CD14-positive monocyte (primary cell): ENCODE measurements at regions of chr1 and their contacts with region 1.

Region 1: DNA sequence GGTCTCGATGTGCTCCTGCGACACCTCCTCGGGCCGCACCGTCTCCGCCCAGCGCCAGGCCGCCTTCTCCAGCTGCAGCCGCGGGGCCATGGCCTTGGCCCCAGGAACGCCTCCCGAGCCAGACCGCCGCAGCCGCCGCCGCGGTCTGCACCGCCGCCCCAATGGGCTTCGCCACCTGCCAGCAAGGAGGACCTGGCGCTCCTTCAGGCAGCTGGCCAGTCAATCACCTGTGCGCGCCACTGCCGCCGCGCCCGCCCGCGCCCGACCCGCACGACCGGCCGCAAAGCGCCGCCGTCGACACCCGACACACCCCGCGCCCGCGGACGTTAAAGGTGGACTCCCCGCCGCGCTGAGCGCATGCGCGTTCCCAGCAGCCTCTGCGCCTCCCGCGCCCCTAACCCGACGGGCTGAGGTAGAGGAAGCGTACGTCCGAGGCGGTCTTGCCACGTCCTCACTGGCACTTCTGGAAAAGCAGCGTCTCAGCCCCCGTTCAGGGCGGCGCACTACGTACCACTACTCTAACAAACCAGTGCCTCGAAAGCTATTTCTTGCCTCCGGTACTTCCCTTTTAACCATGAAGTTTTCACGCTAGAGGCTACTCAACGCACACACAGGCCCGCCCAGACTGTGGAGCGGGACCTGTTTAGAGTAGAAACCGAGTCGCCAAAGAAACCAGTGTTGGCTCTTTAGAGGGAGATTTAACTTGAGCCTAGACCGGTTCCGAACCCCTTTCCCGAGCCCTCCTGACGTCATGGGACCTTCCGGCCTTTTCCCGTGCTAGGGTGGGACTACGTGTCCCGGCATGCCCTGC is at the start of gene USP48:
- DNase-seq: peak; percentile 94 to 96 (median 95)
- H3K4me3 ChIP-seq: peak within 1 kb of the TSS; percentile 83 to 92 (median 84)
- H3K4me3 Mint-ChIP-seq: peak within 1 kb of the TSS; percentile 95 to 99
- H3K27ac ChIP-seq: peak within 1 kb of the TSS; percentile 99 to 100
- H3K27ac Mint-ChIP-seq: peak within 1 kb of the TSS; percentile 100
- H3K4me1 ChIP-seq: peaks cover 31 to 32% of the 10 kb centered on the region in 2 donors
- H3K4me1 Mint-ChIP-seq: peaks cover 35% of the 10 kb centered on the region
- H3K27me3 ChIP-seq: no peaks in the 10 kb centered on the region
- H3K27me3 Mint-ChIP-seq: peaks cover 0 to 4% (median 0%) of the 10 kb centered on the region in 3 donors
- CTCF ChIP-seq: no peak
- polyA plus RNA-seq, gene USP48: 26.5 to 40.2 (median 34.3) TPM

Region 2: GRCh38 chr1:21764615-21765423 is 18.3 kb before region 1 on chr1:
- intact Hi-C with region 1: loop called in 1 of 2 experiments (anchors 2 kb)
- DNase-seq: peak; percentile 89 to 97 (median 95)
- H3K4me3 ChIP-seq: no peak overlapping the region
- H3K4me3 Mint-ChIP-seq: peak overlapping the region in 1 of 2 donors; percentile 30
- H3K27ac ChIP-seq: peak overlapping the region; percentile 53 to 79
- H3K27ac Mint-ChIP-seq: peak overlapping the region; percentile 82 to 96 (median 93)
- H3K4me1 ChIP-seq: peaks cover 84 to 95% of the 10 kb centered on the region in 2 donors
- H3K4me1 Mint-ChIP-seq: peaks cover 81% of the 10 kb centered on the region
- H3K27me3 ChIP-seq: no peaks in the 10 kb centered on the region
- H3K27me3 Mint-ChIP-seq: no peaks in the 10 kb centered on the region
- CTCF ChIP-seq: no peak

Region 3: DNA sequence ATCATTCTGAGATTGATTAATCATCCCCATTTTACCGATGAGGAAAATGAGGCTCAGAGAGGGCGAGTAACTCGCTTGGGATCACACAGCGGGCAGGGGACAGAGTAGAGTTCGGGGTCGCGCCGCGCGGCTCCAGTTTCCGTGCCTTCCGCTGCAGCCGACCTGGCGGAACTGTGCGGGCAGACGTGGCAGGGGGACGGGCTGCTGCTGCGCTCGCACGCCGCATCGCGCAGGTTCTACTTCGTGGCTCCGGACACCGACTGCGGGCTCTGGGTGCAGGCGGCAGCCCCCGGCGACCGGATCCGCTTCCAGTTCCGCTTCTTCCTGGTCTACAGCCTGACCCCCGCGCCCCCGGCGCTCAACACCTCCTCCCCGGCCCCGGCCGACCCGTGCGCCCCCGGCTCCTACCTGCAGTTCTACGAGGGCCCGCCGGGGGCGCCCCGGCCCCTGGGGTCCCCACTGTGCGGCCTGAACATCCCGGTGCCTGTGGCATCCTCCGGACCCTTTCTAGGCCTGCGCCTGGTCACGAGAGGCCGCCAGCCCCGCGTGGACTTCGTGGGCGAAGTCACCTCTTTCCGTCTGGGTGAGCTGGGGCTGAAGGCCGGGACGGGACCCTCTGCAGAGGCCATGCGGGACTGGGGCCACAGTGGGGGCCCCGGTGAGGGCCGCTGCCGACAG is 31.3 kb after region 1 on chr1:
- intact Hi-C with region 1: loop called in 1 of 2 experiments (anchors 5 kb)
- DNase-seq: peak; percentile 34 to 50 (median 43)
- H3K4me3 ChIP-seq: peak overlapping the region; percentile 21 to 72 (median 39)
- H3K4me3 Mint-ChIP-seq: peak overlapping the region; percentile 73 to 88
- H3K27ac ChIP-seq: no peak overlapping the region
- H3K27ac Mint-ChIP-seq: no peak overlapping the region
- H3K4me1 ChIP-seq: peaks cover 28 to 35% of the 10 kb centered on the region in 2 donors
- H3K4me1 Mint-ChIP-seq: peaks cover 31% of the 10 kb centered on the region
- H3K27me3 ChIP-seq: no peaks in the 10 kb centered on the region
- H3K27me3 Mint-ChIP-seq: peaks cover 5 to 12% (median 9%) of the 10 kb centered on the region in 3 donors
- CTCF ChIP-seq: peak; percentile 79